Heart left ventricle (tissue), 16 donors: ENCODE measurements at regions of chrX and their contacts with region 1.

Region 1: DNA sequence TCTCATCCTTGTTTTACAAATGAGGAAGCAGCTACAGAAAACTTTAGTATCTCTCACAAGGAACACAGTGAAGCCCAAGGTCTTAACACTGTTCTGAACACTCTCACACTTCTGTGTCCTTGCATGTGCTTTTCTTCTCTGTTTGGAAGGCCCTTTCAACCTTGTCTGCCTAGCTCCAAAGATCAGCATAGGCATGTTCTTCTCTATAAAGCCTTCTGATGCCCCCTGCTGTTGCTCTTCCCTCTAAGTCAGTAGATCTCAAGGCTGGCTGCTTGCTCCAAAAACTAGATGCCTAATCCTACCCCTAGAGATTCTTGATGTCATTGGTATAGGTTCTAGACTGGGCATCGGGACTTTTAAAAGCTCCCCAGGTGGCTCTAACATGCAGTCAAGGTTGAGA is 5.9 kb downstream of the APOO start:
- DNase-seq: peak in 3 of 5 donors; percentile 40 to 49 (median 44)
- ATAC-seq: peak; percentile 82 to 91 (median 88)
- H3K4me3 ChIP-seq: peak overlapping the region in 7 of 12 donors; percentile 12 to 52 (median 36)
- H3K27ac ChIP-seq: peak overlapping the region in 11 of 12 donors; percentile 46 to 77 (median 68)
- H3K4me1 ChIP-seq: peaks cover 0 to 54% (median 17%) of the 10 kb centered on the region in 12 donors
- H3K27me3 ChIP-seq: peaks cover 0 to 9% (median 0%) of the 10 kb centered on the region in 9 donors
- CTCF ChIP-seq: peak; percentile 14 to 59 (median 42)
- POLR2A ChIP-seq: no peak

Region 2: GRCh38 chrX:23694606-23695005 is 207.2 kb before region 1 on chrX:
- intact Hi-C with region 1: loop called (anchors 2 to 5 kb)
- DNase-seq: peak in 3 of 5 donors; percentile 44 to 73 (median 50)
- ATAC-seq: peak in 3 of 4 donors; percentile 56 to 75 (median 73)
- H3K4me3 ChIP-seq: no peak overlapping the region
- H3K27ac ChIP-seq: no peak overlapping the region
- H3K4me1 ChIP-seq: no peaks in the 10 kb centered on the region
- H3K27me3 ChIP-seq: peaks cover 0 to 2% (median 0%) of the 10 kb centered on the region in 9 donors
- CTCF ChIP-seq: peak; percentile 21 to 57 (median 42)
- POLR2A ChIP-seq: no peak

Region 3: GRCh38 chrX:23742697-23743622 is 158.8 kb before region 1 on chrX and contains the start of gene ACOT9:
- intact Hi-C with region 1: loop called in 3 of 10 experiments (anchors 2 to 10 kb)
- DNase-seq: peak; percentile 90 to 97 (median 94)
- ATAC-seq: peak; percentile 97 to 99 (median 98)
- H3K4me3 ChIP-seq: peak within 1 kb of the TSS; percentile 61 to 98 (median 79)
- H3K27ac ChIP-seq: peak within 1 kb of the TSS; percentile 92 to 100 (median 94)
- H3K4me1 ChIP-seq: peaks cover 0 to 15% (median 4%) of the 10 kb centered on the region in 12 donors
- H3K27me3 ChIP-seq: peaks cover 0 to 2% (median 0%) of the 10 kb centered on the region in 9 donors
- CTCF ChIP-seq: no peak
- POLR2A ChIP-seq: peak; percentile 16 to 78
- total RNA-seq, gene ACOT9: 45.3 to 81.1 (median 59.3) TPM

Region 4: DNA sequence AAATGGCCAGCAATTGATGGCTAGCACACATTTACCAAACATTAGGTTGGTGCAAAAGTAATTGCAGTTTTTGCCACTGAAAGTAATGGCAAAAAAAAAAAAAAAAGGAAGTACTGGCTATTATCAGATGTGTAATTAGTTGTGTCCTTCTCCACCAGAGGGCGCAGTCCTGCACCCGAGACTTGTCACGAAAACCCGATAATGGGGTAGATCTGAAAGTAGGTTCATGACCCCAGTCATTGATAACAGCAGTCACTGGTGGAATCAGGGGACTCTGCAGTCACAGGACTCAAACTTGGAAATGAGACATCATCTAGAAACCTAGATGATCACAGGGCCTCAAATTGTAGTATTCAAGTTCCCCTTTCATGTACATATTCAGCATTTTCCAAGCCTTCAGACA is 145.6 kb before region 1 on chrX:
- intact Hi-C with region 1: loop called in 5 of 10 experiments (anchors 1 to 10 kb)
- DNase-seq: peak in 4 of 5 donors; percentile 39 to 62 (median 47)
- ATAC-seq: peak in 1 of 4 donors; percentile 13
- H3K4me3 ChIP-seq: no peak overlapping the region
- H3K27ac ChIP-seq: no peak overlapping the region
- H3K4me1 ChIP-seq: peaks cover 0 to 11% (median 0%) of the 10 kb centered on the region in 12 donors
- H3K27me3 ChIP-seq: no peaks in the 10 kb centered on the region
- CTCF ChIP-seq: peak in 11 of 12 donors; percentile 31 to 65 (median 52)
- POLR2A ChIP-seq: no peak